K562 (cell line): ENCODE measurements at regions of chr16 and their contacts with region 1.

Region 1: DNA sequence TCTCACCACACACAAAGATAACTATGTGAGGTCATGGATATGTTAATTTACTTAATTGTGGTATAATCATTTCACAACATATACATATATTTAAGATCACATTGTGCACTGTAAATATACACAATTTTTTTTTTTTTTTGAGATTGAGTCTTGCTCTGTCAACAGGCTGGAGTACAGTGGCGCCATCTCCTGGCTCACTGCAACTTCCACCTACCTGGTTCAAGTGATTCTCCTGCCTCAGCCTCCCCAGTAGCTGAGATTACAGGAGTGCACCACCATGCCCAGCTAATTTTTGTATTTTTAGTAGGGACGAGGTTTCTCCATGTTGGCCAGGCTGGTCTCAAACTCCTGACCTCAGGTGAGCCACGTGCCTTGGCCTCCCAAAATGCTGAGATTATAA is 11.5 kb upstream of the PRSS54 start:
- DNase-seq: peak in 1 of 4 experiments; percentile 69
- ATAC-seq: peak; percentile 78
- H3K4me3 ChIP-seq: no peak overlapping the region
- H3K27ac ChIP-seq: no peak overlapping the region
- H3K4me1 ChIP-seq: no peaks in the 10 kb centered on the region
- H3K27me3 ChIP-seq: no peaks in the 10 kb centered on the region
- CTCF ChIP-seq: peak; percentile 57 to 66 (median 61); a peak in 5 of 6 replicates
- EP300 ChIP-seq: no peak
- POLR2A ChIP-seq: no peak
- RAD21 ChIP-seq: peak; percentile 41 to 72; a peak in 3 of 4 replicates

Region 2: GRCh38 chr16:58198022-58198683 is 108.2 kb before region 1 on chr16 and contains the start of gene CSNK2A2:
- CTCF ChIA-PET with region 1: no interaction called
- POLR2A ChIA-PET with region 1: no interaction called
- in situ Hi-C with region 1: no loop called
- intact Hi-C with region 1: loop called (anchors 5 kb)
- DNase-seq: peak; percentile 86 to 96 (median 96)
- ATAC-seq: peak; percentile 97
- H3K4me3 ChIP-seq: peak within 1 kb of the TSS; percentile 64
- H3K27ac ChIP-seq: peak within 1 kb of the TSS; percentile 66
- H3K4me1 ChIP-seq: peaks cover 13 to 17% of the 10 kb centered on the region in 2 experiments; a peak in 4 of 5 replicates
- H3K27me3 ChIP-seq: no peaks in the 10 kb centered on the region; a peak in 1 of 5 replicates
- CTCF ChIP-seq: peak in 2 of 3 experiments; percentile 58 to 61; a peak in 3 of 6 replicates
- EP300 ChIP-seq: no peak
- POLR2A ChIP-seq: peak; percentile 62
- RAD21 ChIP-seq: no peak
- polyA plus RNA-seq, gene CSNK2A2: 23.4 to 25.2 TPM

Region 3: GRCh38 chr16:58331024-58331707 is 24.8 kb after region 1 on chr16:
- CTCF ChIA-PET with region 1: no interaction called
- POLR2A ChIA-PET with region 1: no interaction called
- in situ Hi-C with region 1: no loop called
- intact Hi-C with region 1: no loop called
- DNase-seq: peak; percentile 22 to 46 (median 34)
- ATAC-seq: peak; percentile 83
- H3K4me3 ChIP-seq: no peak overlapping the region
- H3K27ac ChIP-seq: no peak overlapping the region
- H3K4me1 ChIP-seq: no peaks in the 10 kb centered on the region; a peak in 1 of 5 replicates
- H3K27me3 ChIP-seq: peaks cover 2 to 4% of the 10 kb centered on the region in 2 experiments; a peak in 2 of 5 replicates
- CTCF ChIP-seq: no peak
- EP300 ChIP-seq: no peak
- POLR2A ChIP-seq: no peak
- RAD21 ChIP-seq: no peak